ENCODE measurements at regions of chr10 and their contacts with region 1.

Region 1: DNA sequence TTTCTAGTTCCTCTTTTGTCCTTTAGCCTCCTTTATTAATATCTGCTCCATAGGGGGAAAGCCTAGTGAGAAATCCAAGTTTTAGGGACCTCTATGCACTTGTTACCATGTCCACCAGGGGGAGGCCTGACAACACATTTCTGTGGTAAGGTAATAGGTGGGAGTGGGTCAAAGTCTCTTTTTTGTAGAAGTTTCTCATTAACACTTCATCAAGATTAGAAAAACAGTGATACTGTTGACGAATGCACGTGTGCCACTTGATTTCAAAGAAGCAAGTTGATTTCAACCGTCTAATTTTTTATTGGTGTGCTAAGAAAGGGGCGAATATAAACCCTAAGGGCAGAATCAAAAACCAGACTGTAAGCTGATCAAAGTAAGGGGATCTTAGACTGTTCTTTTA is 30.6 kb downstream of the CISD1 start:
- DNase-seq: peak; percentile 81
- H3K4me3 Mint-ChIP-seq: no peak overlapping the region
- H3K27ac Mint-ChIP-seq: no peak overlapping the region
- H3K4me1 Mint-ChIP-seq: no peaks in the 10 kb centered on the region
- H3K27me3 Mint-ChIP-seq: no peaks in the 10 kb centered on the region
- CTCF ChIP-seq: peak; percentile 88

Region 2: DNA sequence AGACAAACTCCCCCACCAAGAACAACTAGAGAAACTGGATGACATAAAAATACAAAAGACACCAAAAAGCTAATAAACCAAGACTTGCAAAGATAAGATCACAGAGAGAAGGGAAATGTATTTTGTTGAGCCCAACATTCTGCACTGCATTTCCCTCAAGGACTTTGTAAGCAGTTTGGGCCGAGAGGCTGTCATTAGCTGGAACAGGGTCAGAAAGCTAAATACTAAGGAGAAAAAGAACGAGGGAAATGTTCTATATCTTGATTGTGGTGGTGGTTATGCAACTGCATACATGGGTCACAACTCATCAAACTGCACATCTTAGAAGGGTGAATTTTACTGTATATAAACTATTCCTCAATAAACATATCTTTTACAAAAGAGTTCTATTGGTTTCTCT is 346.8 kb before region 1 on chr10:
- CTCF ChIA-PET with region 1: no interaction called
- intact Hi-C with region 1: no loop called
- DNase-seq: no peak
- H3K4me3 Mint-ChIP-seq: no peak overlapping the region
- H3K27ac Mint-ChIP-seq: no peak overlapping the region
- H3K4me1 Mint-ChIP-seq: peaks cover 63% of the 10 kb centered on the region
- H3K27me3 Mint-ChIP-seq: no peaks in the 10 kb centered on the region
- CTCF ChIP-seq: no peak

Region 3: DNA sequence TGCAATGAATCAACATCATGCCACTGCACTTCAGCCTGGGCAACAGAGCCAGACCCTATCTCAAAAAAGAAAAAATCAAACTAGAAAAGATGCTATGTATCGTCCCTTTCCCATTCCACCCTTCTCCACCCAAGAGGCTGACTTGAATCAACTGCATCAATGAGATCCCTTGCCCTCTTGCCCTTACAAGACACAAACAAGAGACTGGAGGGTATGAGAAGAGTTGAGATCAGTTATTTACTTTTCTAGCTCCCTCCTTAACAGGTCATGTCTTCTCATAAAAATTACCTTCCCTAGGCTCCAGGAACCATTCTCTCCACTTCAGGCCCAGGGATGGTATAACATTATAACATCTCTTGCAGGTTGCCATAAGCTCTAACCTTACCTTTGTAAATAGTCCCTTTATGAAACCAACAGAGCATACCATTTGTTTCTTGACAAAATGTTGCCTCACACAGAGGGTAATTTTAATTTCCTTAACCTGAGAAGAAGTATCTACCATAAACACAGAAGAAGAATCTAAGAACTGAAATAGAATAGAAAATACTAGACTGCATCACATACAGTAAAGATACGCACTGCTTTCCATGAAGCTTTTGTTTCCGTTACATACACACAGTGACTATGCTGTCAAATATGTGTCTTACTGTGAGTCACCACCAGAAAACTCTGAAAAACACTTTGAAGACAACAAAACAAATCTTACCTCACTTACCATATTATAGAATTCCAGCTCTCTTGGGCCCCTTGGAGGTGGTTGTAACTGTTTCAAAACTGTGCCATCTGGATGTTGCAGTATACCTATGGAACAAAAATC is 62.4 kb before region 1 on chr10:
- CTCF ChIA-PET with region 1: no interaction called
- intact Hi-C with region 1: no loop called
- DNase-seq: peak; percentile 8
- H3K4me3 Mint-ChIP-seq: no peak overlapping the region
- H3K27ac Mint-ChIP-seq: peak overlapping the region; percentile 85
- H3K4me1 Mint-ChIP-seq: peaks cover 27% of the 10 kb centered on the region
- H3K27me3 Mint-ChIP-seq: no peaks in the 10 kb centered on the region
- CTCF ChIP-seq: no peak

Region 4: GRCh38 chr10:58334817-58335305 is 35.3 kb after region 1 on chr10 and contains the start of gene UBE2D1:
- CTCF ChIA-PET with region 1: no interaction called
- intact Hi-C with region 1: loop called (anchors 2 kb)
- DNase-seq: peak; percentile 95
- H3K4me3 Mint-ChIP-seq: peak within 1 kb of the TSS; percentile 97
- H3K27ac Mint-ChIP-seq: peak within 1 kb of the TSS; percentile 87
- H3K4me1 Mint-ChIP-seq: peaks cover 10% of the 10 kb centered on the region
- H3K27me3 Mint-ChIP-seq: peaks cover 17% of the 10 kb centered on the region
- CTCF ChIP-seq: peak; percentile 37
- total RNA-seq, gene UBE2D1: 22.9 and 25.6 TPM in 2 replicates

Region 5: GRCh38 chr10:58372607-58373441 is 73.2 kb after region 1 on chr10:
- CTCF ChIA-PET with region 1: no interaction called
- intact Hi-C with region 1: no loop called
- DNase-seq: no peak
- H3K4me3 Mint-ChIP-seq: no peak overlapping the region
- H3K27ac Mint-ChIP-seq: no peak overlapping the region
- H3K4me1 Mint-ChIP-seq: no peaks in the 10 kb centered on the region
- H3K27me3 Mint-ChIP-seq: no peaks in the 10 kb centered on the region
- CTCF ChIP-seq: no peak

Region 6: DNA sequence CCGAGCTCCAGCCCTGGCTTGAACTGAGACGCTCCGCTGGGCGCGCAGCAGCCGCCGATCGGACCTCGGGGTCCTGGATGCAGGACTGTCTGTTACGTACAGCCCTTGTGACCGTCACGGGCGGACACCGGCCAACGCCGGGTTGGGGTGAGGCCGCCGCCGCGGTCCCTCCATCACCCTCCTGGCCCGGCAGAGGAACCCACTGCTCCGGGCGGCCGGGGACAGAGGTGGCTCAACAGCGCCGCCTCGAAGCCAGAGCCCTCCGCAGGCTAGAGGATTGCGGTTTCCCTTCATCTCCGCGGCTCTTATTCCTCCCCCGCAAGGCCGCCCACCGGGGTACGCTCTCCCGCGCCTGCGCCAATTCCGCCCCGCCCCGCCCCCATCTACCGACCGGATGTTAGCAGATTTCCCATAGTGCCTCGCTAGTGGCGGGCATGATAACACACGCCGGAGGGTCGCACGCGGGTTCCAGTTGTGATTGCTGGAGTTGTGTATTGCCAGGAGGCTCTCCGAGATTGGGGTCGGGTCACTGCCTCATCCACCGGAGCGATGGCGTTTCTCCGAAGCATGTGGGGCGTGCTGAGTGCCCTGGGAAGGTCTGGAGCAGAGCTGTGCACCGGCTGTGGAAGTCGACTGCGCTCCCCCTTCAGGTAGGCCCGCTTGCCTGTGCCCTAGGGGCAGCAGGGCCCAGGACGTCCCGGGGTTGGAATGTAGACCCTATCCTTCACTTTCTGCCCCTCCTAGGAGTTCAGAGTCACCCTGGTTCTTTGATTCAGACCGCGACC is 85.6 kb after region 1 on chr10 and contains the start of gene TFAM:
- CTCF ChIA-PET with region 1: interaction called, 15 read pairs
- intact Hi-C with region 1: loop called (anchors 1 kb)
- DNase-seq: peak; percentile 99
- H3K4me3 Mint-ChIP-seq: peak within 1 kb of the TSS; percentile 94
- H3K27ac Mint-ChIP-seq: peak within 1 kb of the TSS; percentile 71
- H3K4me1 Mint-ChIP-seq: peaks cover 21% of the 10 kb centered on the region
- H3K27me3 Mint-ChIP-seq: no peaks in the 10 kb centered on the region
- CTCF ChIP-seq: peak; percentile 86
- total RNA-seq, gene TFAM: 91.8 and 94.3 TPM in 2 replicates

Region 7: DNA sequence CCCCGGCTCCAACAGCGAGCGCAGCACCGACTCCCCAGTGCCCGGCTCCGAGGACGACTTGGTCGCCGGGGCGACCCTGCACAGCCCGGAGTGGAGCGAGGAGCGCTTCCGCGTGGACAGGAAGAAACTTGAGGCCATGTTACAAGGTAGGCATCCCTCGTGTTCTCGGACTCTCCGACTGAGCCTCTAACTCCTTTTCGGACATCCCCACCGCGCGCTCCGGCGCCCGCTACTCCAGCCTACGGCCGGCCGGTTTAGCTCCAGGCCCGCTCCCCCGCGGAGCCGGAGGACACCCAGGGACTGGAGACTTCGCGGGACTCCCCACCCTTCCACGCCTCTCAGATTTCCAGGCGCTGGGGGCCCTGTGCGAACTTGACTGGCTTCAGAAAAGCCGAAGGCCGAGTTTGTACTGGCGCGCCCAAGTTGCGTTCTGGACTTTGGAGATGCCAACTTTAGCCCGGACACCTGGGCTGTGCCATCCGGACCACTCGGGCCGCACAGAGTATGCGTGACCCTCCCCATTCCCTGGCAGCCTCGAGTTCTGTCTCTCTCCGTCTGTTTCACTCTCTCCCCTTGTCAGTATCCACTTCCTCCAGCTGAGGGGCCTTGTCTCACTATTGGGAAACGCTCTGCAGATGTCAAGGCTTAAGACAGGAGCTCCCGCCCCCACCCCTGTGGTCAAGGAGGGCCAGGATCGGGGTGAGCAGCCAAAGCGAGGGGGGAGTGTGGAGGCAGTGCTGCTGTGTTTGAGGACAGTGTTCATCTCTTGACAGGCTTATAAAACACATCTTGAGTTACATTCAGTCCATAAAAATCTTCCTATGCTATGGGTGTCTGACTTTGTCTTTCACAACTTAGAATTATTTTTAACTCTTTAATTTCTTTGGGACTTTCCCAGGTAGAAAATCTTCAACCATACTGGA is 213.9 kb after region 1 on chr10:
- CTCF ChIA-PET with region 1: no interaction called
- intact Hi-C with region 1: loop called (anchors 10 kb)
- DNase-seq: peak; percentile 82
- H3K4me3 Mint-ChIP-seq: peak overlapping the region; percentile 77
- H3K27ac Mint-ChIP-seq: peak overlapping the region; percentile 76
- H3K4me1 Mint-ChIP-seq: peaks cover 33% of the 10 kb centered on the region
- H3K27me3 Mint-ChIP-seq: no peaks in the 10 kb centered on the region
- CTCF ChIP-seq: no peak